Right ventricle myocardium inferior (tissue), 1 donor: ENCODE measurements at regions of chr11 and their contacts with region 1.

Region 1: GRCh38 chr11:94845622-94846021 is 77.5 kb downstream of the AMOTL1 start:
- DNase-seq: no peak
- ATAC-seq: no peak

Region 2: GRCh38 chr11:94028436-94028835 is 817.2 kb before region 1 on chr11:
- intact Hi-C with region 1: no loop called
- DNase-seq: no peak
- ATAC-seq: no peak

Region 3: DNA sequence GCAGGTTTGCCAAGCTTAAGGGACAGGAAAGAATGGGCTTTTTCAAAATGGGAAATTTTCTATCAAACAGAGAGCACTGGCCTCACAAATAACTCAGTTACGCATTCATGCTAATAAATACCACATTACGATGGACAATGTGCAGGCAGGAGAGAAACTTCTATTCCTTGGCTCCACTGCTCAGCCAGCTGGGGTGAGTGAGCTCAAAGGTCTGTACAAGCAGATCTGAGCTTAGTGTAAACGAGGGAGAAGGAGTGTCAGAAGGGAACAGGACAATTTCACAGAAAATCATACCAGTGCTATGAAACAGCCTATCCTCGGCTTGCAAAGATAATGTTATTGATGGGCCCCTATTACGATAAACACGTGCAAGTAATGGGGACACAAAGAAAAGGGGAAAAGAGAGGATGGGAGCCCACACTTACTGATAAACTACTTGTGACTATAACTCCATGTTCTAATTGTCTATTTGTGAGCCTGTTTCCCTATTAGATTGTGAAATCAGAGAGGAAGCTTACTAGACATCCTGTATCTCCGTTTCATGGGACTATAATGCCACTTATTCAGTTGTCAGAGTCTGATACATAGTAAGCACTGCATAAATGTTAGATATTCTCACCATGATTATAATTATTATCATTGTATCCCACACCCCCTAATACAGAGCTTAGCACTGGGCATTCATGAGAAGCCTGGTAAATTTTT is 31.2 kb before region 1 on chr11:
- intact Hi-C with region 1: loop called (anchors 5 kb)
- DNase-seq: no peak
- ATAC-seq: peak; percentile 63

Region 4: GRCh38 chr11:94885133-94885532 is 39.5 kb after region 1 on chr11:
- intact Hi-C with region 1: no loop called
- DNase-seq: no peak
- ATAC-seq: no peak